AG04450 (cell line): ENCODE measurements at regions of chr9 and their contacts with region 1.

Region 1: DNA sequence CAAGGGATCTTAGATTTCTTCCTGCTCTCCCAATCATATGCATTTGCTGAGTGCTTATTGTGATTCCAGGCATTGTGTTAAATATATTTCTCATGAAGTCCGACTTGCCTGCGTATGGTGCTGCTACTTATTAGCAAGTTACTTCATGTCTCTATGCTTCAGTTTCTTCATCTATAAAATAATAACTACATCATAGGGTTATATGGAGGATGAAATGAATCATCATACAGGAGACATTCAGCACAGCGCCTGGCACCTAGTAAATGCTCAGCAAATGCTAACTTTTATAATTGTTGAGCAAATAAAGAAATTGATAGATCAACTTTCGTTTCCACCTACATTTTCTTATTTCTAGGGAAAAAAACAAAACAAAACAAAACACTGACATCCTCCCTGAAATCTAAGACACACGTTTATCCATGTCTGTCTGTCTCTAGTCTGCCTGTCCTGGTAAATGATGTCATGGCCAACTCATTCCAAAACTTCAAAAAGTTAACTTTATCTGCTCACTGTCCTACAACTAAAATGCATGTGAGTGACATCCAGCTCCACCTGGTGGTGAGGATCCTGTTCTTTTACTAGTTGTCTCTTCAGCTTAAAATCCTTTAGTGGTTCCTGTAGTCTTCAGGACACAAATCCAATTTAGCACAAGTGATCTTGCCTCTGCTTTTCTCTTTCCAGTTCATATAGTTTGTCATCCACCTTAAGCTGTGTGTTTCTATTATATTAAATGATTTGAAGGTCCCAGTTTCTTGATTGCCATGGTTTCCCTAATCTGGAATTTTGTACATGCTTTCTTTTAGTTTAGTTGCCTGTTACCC is 27.7 kb downstream of the PPP3R2 start:
- DNase-seq: no peak
- H3K4me3 ChIP-seq: no peak overlapping the region
- H3K27ac ChIP-seq: no peak overlapping the region
- H3K27me3 ChIP-seq: no peaks in the 10 kb centered on the region
- CTCF ChIP-seq: peak; percentile 68

Region 2: DNA sequence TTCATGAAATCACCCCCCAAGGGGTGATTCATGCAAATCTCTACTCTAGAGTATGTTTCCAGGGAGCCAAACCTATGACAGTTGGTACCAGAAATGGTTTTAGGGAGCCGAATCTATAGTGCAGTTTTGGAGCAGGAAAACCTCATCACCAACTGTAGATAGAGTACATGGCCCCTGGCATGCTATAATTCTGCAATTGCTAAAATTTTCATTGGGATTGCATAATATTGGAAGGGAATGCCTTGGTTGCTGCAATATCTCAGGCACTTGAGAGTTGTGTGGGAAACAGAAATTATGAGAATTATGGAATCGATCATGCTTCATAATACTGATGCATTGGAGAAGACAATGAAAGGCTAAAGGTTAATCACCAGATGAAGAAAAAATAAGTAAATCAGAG is 686.8 kb before region 1 on chr9:
- CTCF ChIA-PET with region 1: no interaction called
- POLR2A ChIA-PET with region 1: no interaction called
- DNase-seq: no peak
- H3K4me3 ChIP-seq: no peak overlapping the region
- H3K27ac ChIP-seq: no peak overlapping the region
- H3K27me3 ChIP-seq: no peaks in the 10 kb centered on the region
- CTCF ChIP-seq: no peak

Region 3: GRCh38 chr9:101354143-101354764 is 212.9 kb before region 1 on chr9:
- CTCF ChIA-PET with region 1: no interaction called
- POLR2A ChIA-PET with region 1: no interaction called
- DNase-seq: no peak
- H3K4me3 ChIP-seq: no peak overlapping the region
- H3K27ac ChIP-seq: no peak overlapping the region
- H3K27me3 ChIP-seq: no peaks in the 10 kb centered on the region
- CTCF ChIP-seq: no peak

Region 4: GRCh38 chr9:101465392-101465791 is 101.7 kb before region 1 on chr9:
- CTCF ChIA-PET with region 1: interaction called, 14 read pairs
- POLR2A ChIA-PET with region 1: no interaction called
- DNase-seq: no peak
- H3K4me3 ChIP-seq: no peak overlapping the region
- H3K27ac ChIP-seq: no peak overlapping the region
- H3K27me3 ChIP-seq: no peaks in the 10 kb centered on the region
- CTCF ChIP-seq: peak; percentile 51

Region 5: DNA sequence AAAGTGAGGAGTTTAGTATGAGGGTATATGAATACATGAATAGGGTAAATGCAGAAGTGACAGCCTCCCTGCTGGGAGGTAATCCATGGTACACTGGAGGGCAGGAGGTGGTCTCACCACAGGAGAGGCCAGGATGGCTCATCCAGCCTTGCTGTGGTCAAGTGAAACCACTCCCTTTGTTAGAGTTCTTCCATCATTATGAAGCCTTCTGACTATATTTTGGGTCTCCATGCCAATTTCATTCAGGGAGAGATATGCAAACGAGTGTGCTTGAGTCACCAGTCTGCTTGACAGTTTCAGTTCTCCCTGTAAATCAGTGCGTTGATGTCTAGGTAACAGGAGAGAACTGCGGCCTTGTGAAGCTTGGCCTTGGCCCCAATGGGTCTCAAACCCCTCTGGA is 11.3 kb after region 1 on chr9:
- CTCF ChIA-PET with region 1: interaction called, 13 read pairs
- POLR2A ChIA-PET with region 1: no interaction called
- DNase-seq: no peak
- H3K4me3 ChIP-seq: no peak overlapping the region
- H3K27ac ChIP-seq: no peak overlapping the region
- H3K27me3 ChIP-seq: no peaks in the 10 kb centered on the region
- CTCF ChIP-seq: no peak

Region 6: DNA sequence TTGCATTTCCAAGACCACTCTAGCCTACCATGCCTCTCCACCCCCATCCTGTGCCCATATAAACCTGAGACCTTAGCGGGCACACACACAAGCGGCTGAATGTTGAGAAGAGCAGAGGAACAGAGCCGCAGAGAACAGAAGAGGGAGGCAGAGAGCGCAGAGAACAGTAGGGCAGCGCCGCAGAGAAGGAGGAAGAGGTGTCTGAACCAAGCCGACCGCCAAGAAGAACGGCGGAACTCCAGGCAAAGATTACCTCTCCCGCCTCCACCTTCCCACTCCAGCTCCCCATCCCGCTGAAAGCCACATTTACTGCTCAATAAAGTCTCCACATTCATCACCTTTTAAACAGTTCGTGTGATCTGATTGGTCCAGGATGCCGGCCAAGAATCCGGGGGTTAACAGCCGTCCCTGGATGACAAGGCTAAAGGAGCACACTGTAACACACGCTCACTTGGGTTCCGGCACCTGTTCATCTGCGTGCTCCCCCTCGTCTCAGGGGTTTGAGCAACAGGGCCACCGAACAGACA is 138.1 kb after region 1 on chr9:
- CTCF ChIA-PET with region 1: no interaction called
- POLR2A ChIA-PET with region 1: no interaction called
- DNase-seq: no peak
- H3K4me3 ChIP-seq: no peak overlapping the region
- H3K27ac ChIP-seq: no peak overlapping the region
- H3K27me3 ChIP-seq: no peaks in the 10 kb centered on the region
- CTCF ChIP-seq: no peak